Heart left ventricle (tissue), 16 donors: ENCODE measurements at regions of chr3 and their contacts with region 1.

Region 1: DNA sequence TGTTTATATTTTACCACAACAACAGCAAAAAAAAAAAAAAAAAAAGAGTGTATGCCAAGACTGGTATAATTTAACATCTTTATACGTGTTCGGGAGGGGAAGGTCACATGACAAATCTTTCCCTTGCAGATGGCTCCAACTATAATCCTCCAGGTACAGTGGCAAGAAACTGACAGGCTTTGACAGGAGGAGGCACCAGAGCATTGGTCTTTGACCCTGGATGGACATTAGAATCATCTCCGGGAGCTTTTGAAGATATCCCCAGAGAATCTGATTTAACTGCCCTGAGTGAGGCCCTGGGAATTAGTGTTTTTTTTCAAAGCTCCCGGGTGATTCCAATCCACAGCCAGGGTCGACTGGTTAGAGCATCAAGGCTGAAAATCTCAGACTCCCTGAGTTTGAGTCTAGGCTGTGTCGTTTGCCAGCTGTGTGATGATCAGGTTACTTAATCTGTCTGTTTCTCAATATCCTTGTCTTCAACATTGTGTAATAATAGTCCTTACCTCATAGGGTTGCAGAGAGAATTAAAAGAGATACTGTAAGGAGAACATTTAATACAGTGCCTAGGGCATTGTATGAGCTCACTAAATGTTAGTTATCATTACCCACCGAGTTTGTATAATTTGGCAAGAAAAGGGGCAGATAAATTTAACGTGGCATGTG is 8.9 kb upstream of the SEMA5B start:
- DNase-seq: no peak
- ATAC-seq: peak; percentile 31 to 73 (median 60)
- H3K4me3 ChIP-seq: no peak overlapping the region
- H3K27ac ChIP-seq: no peak overlapping the region
- H3K4me1 ChIP-seq: peaks cover 0 to 6% (median 0%) of the 10 kb centered on the region in 12 donors
- H3K27me3 ChIP-seq: no peaks in the 10 kb centered on the region
- CTCF ChIP-seq: peak in 2 of 12 donors; percentile 6 to 20
- POLR2A ChIP-seq: no peak

Region 2: GRCh38 chr3:122754929-122755328 is 281.6 kb before region 1 on chr3:
- intact Hi-C with region 1: no loop called
- DNase-seq: no peak
- ATAC-seq: peak in 3 of 4 donors; percentile 32 to 50 (median 38)
- H3K4me3 ChIP-seq: no peak overlapping the region
- H3K27ac ChIP-seq: no peak overlapping the region
- H3K4me1 ChIP-seq: peaks cover 0 to 17% (median 0%) of the 10 kb centered on the region in 12 donors
- H3K27me3 ChIP-seq: no peaks in the 10 kb centered on the region
- CTCF ChIP-seq: peak; percentile 25 to 65 (median 48)
- POLR2A ChIP-seq: no peak

Region 3: DNA sequence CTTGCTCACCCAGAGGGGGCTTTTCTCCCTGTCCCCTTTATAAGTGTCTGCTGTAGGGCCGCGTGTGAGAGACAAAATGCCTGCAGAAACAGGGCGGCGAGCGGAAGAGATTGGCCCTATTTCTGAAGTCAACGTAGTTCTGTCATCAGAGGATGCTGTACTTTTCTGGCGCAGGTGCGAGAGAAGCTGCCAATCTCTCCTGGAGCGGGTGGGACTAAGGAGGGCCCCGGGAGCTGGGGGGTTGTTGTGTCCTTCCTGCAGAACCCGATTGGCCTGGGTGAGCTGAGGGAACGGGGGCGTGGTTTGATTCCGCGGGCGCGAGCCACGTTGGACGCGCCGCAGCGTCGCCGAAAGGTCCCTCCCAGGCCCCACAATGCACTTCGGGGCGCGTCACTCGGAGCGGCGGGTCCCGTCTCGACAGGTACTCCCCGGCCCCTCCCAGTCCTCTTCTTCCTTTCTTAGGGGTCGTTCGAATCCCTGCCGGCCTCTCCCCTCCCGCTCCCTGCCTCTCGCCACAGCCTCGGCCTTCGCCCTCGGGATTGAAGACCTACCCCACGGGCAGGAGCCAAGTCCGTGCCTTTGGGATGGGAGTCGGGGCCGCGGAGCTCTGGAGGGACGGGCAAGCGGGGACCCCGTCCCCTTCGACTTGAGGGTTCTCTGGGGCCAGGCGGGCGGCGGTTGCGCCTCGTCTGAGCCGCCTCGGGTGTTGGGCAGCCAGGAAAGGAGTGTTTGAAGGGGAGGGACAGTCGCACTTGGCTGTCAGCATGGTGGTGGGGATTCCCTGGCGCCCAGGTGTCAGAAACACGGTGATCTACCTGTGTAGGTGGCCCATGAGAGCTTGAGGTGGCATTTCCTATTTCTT is 165.3 kb after region 1 on chr3 and contains the start of gene SEC22A:
- intact Hi-C with region 1: loop called in 1 of 10 experiments (anchors 10 kb)
- DNase-seq: peak; percentile 92 to 94 (median 93)
- ATAC-seq: peak; percentile 98 to 100 (median 99)
- H3K4me3 ChIP-seq: peak within 1 kb of the TSS; percentile 74 to 99 (median 96)
- H3K27ac ChIP-seq: peak within 1 kb of the TSS; percentile 56 to 93 (median 84)
- H3K4me1 ChIP-seq: peaks cover 0 to 22% (median 10%) of the 10 kb centered on the region in 12 donors
- H3K27me3 ChIP-seq: no peaks in the 10 kb centered on the region
- CTCF ChIP-seq: no peak
- POLR2A ChIP-seq: peak in 1 of 2 donors; percentile 80
- total RNA-seq, gene SEC22A: 7.6 to 27.0 (median 10.0) TPM

Region 4: DNA sequence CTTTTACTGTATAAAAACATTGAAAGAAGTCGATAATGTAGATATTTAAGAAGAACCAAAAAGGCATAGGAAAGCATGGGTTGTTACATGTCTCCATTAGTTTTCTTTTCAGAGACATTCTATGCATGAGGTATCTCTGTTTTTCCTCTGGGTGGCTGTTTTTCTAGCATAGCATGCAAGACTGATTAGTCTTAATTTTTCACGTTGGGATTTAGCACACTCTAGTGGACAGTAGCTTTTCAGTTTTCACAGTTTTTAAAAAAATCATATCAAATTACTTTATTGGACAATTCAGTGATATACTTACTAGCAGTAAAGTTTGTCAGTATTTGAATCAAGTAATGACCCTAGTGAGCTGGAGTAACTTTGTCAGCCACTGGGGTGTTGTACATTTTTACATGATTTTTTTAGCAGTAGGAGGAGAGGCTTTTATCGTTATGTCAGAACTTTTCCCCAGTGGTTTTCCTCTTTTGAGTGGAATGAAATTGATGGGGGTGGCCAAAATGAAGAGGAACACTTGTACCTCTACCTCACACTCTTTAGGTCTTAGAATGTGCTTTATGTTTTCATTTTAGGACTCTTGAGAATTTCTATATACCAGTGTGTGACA is 222.4 kb after region 1 on chr3:
- intact Hi-C with region 1: loop called in 3 of 10 experiments (anchors 5 to 10 kb)
- DNase-seq: no peak
- ATAC-seq: peak in 3 of 4 donors; percentile 22 to 58 (median 56)
- H3K4me3 ChIP-seq: no peak overlapping the region
- H3K27ac ChIP-seq: no peak overlapping the region
- H3K4me1 ChIP-seq: peaks cover 0 to 12% (median 0%) of the 10 kb centered on the region in 12 donors
- H3K27me3 ChIP-seq: no peaks in the 10 kb centered on the region
- CTCF ChIP-seq: peak; percentile 33 to 73 (median 57)
- POLR2A ChIP-seq: no peak